ENCODE measurements at regions of chr4 and their contacts with region 1.

Region 1: GRCh38 chr4:18593445-18594002 is 572.0 kb upstream of the LCORL start:
- DNase-seq: peak; percentile 63
- ATAC-seq: peak; percentile 87
- H3K4me3 ChIP-seq: peak overlapping the region in 1 of 2 experiments; percentile 18; a peak in 1 of 4 replicates
- H3K27ac ChIP-seq: no peak overlapping the region
- H3K4me1 ChIP-seq: peaks cover 0 to 4% of the 10 kb centered on the region in 2 experiments; a peak in 1 of 4 replicates
- H3K27me3 ChIP-seq: peaks cover 8% of the 10 kb centered on the region; the same call in 1 of the 2 replicates
- CTCF ChIP-seq: peak; percentile 52 to 88 (median 77); a peak in 5 of 6 replicates
- POLR2A ChIP-seq: no peak
- RAD21 ChIP-seq: peak; percentile 86

Region 2: GRCh38 chr4:17347445-17347844 is 1246.1 kb before region 1 on chr4:
- CTCF ChIA-PET with region 1: no interaction called
- POLR2A ChIA-PET with region 1: no interaction called
- RAD21 ChIA-PET with region 1: no interaction called
- intact Hi-C with region 1: loop called (anchors 10 kb)
- DNase-seq: peak; percentile 16
- ATAC-seq: peak; percentile 87
- H3K4me3 ChIP-seq: no peak overlapping the region
- H3K27ac ChIP-seq: no peak overlapping the region
- H3K4me1 ChIP-seq: no peaks in the 10 kb centered on the region
- H3K27me3 ChIP-seq: no peaks in the 10 kb centered on the region
- CTCF ChIP-seq: peak; percentile 65 to 75 (median 68); a peak in 5 of 6 replicates
- POLR2A ChIP-seq: no peak
- RAD21 ChIP-seq: peak; percentile 77

Region 3: GRCh38 chr4:17544205-17544604 is 1049.3 kb before region 1 on chr4:
- CTCF ChIA-PET with region 1: no interaction called
- POLR2A ChIA-PET with region 1: no interaction called
- RAD21 ChIA-PET with region 1: no interaction called
- intact Hi-C with region 1: loop called (anchors 2 kb)
- DNase-seq: no peak
- ATAC-seq: no peak
- H3K4me3 ChIP-seq: no peak overlapping the region
- H3K27ac ChIP-seq: no peak overlapping the region
- H3K4me1 ChIP-seq: no peaks in the 10 kb centered on the region; a peak in 1 of 4 replicates
- H3K27me3 ChIP-seq: no peaks in the 10 kb centered on the region
- CTCF ChIP-seq: no peak
- POLR2A ChIP-seq: no peak
- RAD21 ChIP-seq: no peak

Region 4: DNA sequence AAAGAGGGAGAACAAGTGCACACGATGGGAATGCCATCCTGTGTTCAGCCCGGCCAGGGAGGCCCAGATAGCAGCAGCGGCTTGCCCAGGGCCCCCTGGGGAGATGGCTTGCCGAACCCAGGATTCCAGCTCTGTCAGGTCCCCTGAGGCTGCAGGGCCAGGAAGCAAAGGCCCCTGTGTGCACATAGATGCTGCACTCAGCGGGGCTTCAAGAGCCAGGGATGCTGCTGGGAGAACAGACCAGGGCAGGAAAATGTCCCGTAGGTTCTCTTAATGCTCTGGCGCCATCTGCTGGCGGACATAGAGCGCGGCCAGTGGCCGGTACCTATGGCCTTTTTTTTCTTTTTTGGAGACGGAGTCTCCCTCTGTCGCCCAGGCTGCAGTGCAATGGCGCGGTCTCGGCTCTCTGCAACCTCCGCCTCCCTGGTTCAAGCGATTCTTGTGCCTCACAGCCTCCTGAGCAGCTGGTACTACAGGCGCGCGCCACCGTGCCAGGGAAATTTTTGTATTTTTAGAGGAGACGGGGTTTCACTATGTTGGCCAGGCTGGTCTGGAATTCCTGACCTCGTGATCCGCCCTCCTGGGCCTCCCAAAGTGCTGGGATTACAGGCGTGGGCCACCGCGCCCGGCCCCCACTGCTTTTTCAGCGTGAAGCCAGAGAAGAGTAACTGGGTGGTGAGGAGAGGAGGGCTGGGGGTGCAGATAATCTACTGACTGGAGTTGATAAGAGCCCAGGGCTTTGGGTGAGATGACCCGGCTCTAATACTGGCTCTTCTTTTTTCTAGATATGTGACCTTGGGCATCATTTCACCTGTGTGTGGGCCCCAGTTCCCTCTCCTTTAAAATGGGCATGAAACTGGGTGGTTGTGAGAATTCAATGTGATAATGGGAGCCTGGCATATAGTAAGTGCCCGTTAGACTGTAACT is 956.6 kb before region 1 on chr4:
- CTCF ChIA-PET with region 1: no interaction called
- POLR2A ChIA-PET with region 1: no interaction called
- RAD21 ChIA-PET with region 1: no interaction called
- intact Hi-C with region 1: loop called (anchors 1 kb)
- DNase-seq: peak; percentile 36
- ATAC-seq: peak; percentile 96
- H3K4me3 ChIP-seq: no peak overlapping the region
- H3K27ac ChIP-seq: no peak overlapping the region
- H3K4me1 ChIP-seq: no peaks in the 10 kb centered on the region
- H3K27me3 ChIP-seq: no peaks in the 10 kb centered on the region
- CTCF ChIP-seq: peak; percentile 76 to 90 (median 84)
- POLR2A ChIP-seq: no peak
- RAD21 ChIP-seq: peak; percentile 75

Region 5: DNA sequence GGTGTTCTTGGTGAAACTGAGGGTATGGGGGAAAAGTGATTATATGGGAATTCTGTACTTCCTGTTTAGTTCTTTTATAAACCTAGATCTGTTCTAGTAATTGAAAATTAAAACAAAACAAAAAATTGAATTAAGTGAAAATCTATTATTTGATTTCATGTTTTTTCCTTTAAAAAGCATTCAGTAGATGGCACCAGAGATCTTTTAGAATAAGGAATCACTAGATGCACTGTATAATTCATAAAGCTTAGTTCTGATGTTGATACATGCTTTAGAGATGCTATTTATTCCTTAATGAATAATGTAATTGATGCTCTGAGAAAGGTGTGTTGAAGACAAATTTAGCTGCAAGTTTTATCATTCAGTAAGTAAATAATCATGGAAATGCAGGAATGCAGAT is 659.2 kb before region 1 on chr4:
- CTCF ChIA-PET with region 1: no interaction called
- POLR2A ChIA-PET with region 1: no interaction called
- RAD21 ChIA-PET with region 1: no interaction called
- intact Hi-C with region 1: loop called (anchors 1 kb)
- DNase-seq: no peak
- ATAC-seq: no peak
- H3K4me3 ChIP-seq: no peak overlapping the region
- H3K27ac ChIP-seq: no peak overlapping the region
- H3K4me1 ChIP-seq: no peaks in the 10 kb centered on the region
- H3K27me3 ChIP-seq: no peaks in the 10 kb centered on the region
- CTCF ChIP-seq: no peak; a peak in 2 of 6 replicates
- POLR2A ChIP-seq: no peak
- RAD21 ChIP-seq: peak; percentile 13; the same call in 1 of the 2 replicates

Region 6: GRCh38 chr4:18155062-18156041 is 438.2 kb before region 1 on chr4:
- CTCF ChIA-PET with region 1: no interaction called
- POLR2A ChIA-PET with region 1: no interaction called
- RAD21 ChIA-PET with region 1: no interaction called
- intact Hi-C with region 1: no loop called
- DNase-seq: no peak
- ATAC-seq: no peak
- H3K4me3 ChIP-seq: no peak overlapping the region
- H3K27ac ChIP-seq: no peak overlapping the region
- H3K4me1 ChIP-seq: no peaks in the 10 kb centered on the region
- H3K27me3 ChIP-seq: no peaks in the 10 kb centered on the region
- CTCF ChIP-seq: no peak
- POLR2A ChIP-seq: no peak
- RAD21 ChIP-seq: no peak